Panc1 (cell line): ENCODE measurements at regions of chr17 and their contacts with region 1.

Region 1: DNA sequence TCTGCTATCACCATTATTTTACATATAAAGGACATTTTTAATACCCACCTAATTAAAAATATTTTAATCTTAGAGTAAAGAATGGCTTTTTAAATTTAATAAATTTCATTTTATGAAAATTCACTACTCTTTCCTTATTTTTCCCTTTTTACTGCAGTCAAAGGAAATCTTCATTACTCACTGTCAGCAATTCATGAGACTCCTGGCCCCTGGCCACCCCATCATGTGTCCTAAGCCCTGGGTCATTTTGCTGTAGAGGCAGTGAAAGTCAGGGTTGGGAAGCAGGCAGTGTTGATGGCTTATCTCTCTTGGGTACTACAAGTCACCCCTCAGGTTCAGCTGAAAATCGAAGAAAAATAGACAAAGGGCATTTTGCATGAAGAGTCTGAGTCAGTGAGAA is 468.6 kb upstream of the CCL2 start:
- DNase-seq: no peak
- ATAC-seq: no peak
- H3K4me3 ChIP-seq: no peak overlapping the region
- H3K27ac ChIP-seq: no peak overlapping the region
- H3K4me1 ChIP-seq: no peaks in the 10 kb centered on the region
- H3K27me3 ChIP-seq: 0 out of 2 replicates have a peak, but pooled peaks cover under 1% of the 10 kb centered on the region
- CTCF ChIP-seq: no peak

Region 2: DNA sequence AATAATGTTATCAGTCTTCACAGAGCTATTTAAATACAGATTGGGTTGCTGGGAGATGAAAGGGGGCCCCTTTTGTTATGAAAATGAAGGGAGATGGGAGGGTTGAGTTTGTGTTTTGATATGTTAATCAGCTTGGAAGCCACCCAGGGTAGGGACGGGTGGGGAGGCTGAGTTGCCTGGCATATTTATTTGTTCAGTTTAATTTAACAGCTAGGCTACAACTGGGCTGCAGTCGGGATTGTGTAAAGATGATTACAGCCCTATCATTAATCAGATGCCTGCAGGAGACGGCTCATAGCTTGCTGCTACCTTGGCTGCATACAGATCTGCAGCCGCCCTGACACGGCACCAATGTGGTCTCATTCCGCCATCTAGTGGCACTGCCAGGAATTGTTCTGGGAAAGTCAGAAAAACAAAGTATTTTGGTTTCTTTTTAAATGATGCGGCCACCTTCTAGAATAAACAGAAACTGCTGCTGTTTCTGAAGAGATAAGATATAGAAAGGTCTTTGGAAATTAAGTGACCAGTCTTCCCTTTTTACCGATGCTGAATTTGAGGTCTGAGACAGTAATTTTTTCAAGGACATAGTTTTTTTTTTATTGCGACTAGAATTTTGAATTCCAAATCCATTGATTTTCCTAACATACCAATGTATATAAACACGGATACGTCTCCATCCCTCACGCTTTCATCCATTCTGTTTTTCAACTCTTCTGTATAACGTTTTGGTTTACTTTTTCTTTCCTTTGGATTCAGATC is 35.4 kb before region 1 on chr17:
- CTCF ChIA-PET with region 1: no interaction called
- POLR2A ChIA-PET with region 1: no interaction called
- in situ Hi-C with region 1: no loop called
- intact Hi-C with region 1: no loop called
- DNase-seq: peak; percentile 39
- ATAC-seq: peak; percentile 91
- H3K4me3 ChIP-seq: 0 out of 4 replicates have a peak overlapping the region, but pooled peaks of 1 of the 2 experiments have one; percentile 6
- H3K27ac ChIP-seq: no peak overlapping the region
- H3K4me1 ChIP-seq: peaks cover 4% of the 10 kb centered on the region
- H3K27me3 ChIP-seq: peaks cover 8% of the 10 kb centered on the region
- CTCF ChIP-seq: peak; percentile 93

Region 3: GRCh38 chr17:33933576-33933975 is 147.1 kb after region 1 on chr17:
- CTCF ChIA-PET with region 1: no interaction called
- POLR2A ChIA-PET with region 1: no interaction called
- in situ Hi-C with region 1: no loop called
- intact Hi-C with region 1: loop called (anchors 10 kb)
- DNase-seq: no peak
- ATAC-seq: no peak
- H3K4me3 ChIP-seq: no peak overlapping the region
- H3K27ac ChIP-seq: no peak overlapping the region
- H3K4me1 ChIP-seq: no peaks in the 10 kb centered on the region
- H3K27me3 ChIP-seq: 0 out of 2 replicates have a peak, but pooled peaks cover 2% of the 10 kb centered on the region
- CTCF ChIP-seq: no peak